ENCODE measurements at regions of chr1 and their contacts with region 1.

Region 1: DNA sequence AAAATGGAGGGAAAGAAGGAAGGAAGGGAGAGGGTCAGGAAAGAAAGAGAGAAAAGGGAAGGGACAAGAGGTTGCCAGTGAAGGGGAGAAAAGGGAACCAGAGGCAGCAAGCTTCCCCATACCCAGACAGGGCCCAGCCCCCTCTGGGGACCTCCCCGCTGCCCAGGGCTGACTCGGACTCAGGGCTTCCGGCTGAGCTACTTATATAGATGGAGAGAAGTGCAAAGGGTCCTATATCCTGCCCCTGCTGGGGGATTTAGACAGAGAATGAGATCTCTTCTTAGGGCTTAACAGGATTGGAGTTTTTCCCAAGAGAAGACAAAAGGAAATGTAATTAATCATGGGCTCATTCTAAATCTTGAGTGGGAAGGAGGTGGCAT is at the start of gene ETV3L:
- DNase-seq: no peak
- ATAC-seq: no peak
- H3K4me3 ChIP-seq: no peak within 1 kb of the TSS
- H3K27ac ChIP-seq: no peak within 1 kb of the TSS
- H3K4me1 ChIP-seq: no peaks in the 10 kb centered on the region
- H3K27me3 ChIP-seq: no peaks in the 10 kb centered on the region
- CTCF ChIP-seq: no peak
- POLR2A ChIP-seq: no peak
- total RNA-seq, gene ETV3L: not detected

Region 2: GRCh38 chr1:155295183-155295941 is 1804.3 kb before region 1 on chr1:
- in situ Hi-C with region 1: no loop called
- intact Hi-C with region 1: no loop called
- DNase-seq: no peak
- ATAC-seq: no peak
- H3K4me3 ChIP-seq: peak overlapping the region in 3 of 4 donors; percentile 1 to 9 (median 9)
- H3K27ac ChIP-seq: no peak overlapping the region
- H3K4me1 ChIP-seq: no peaks in the 10 kb centered on the region
- H3K27me3 ChIP-seq: peaks cover 17 to 25% (median 24%) of the 10 kb centered on the region in 3 donors
- CTCF ChIP-seq: no peak
- POLR2A ChIP-seq: no peak

Region 3: GRCh38 chr1:157163273-157164127 is 63.9 kb after region 1 on chr1:
- in situ Hi-C with region 1: loop called in 2 of 4 experiments (anchors 5 kb)
- intact Hi-C with region 1: no loop called
- DNase-seq: peak in 1 of 2 donors; percentile 41
- ATAC-seq: peak; percentile 36 to 75
- H3K4me3 ChIP-seq: peak overlapping the region in 1 of 4 donors; percentile 28
- H3K27ac ChIP-seq: no peak overlapping the region
- H3K4me1 ChIP-seq: no peaks in the 10 kb centered on the region
- H3K27me3 ChIP-seq: no peaks in the 10 kb centered on the region
- CTCF ChIP-seq: peak; percentile 40 to 90 (median 62)
- POLR2A ChIP-seq: no peak

Measured in gastrocnemius medialis (tissue), 4 donors.